ENCODE measurements at regions of chr10 and their contacts with region 1.

Region 1: DNA sequence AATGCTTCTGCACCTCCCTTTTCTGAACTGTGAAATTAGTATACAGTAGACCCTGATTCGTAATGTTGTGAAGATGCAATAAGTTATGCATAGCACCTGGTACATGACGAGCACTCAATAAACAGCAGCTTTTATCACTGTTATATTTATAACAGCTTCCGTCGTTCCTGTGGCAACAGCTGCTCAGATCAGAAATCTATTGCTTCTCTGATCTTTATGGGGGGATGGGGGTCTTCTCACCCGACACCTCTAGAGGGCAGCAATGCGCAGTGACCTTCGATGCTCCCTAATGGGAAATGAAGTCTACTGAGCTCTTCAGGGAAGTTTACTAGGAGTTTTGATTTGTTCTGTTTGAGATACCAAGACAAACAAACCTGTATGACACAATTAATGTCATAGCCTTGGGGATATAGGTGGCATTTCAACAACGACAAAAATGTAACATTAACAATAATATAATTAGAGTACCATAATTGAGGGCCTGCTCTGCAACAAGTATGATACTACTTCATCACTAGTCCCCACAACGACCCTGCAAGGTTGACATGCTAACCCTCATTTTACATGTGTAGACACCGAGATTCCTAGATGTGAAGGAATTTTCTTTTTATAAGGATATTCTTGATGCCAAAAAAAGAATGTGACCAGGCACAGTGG is 289.6 kb downstream of the SFMBT2 start:
- DNase-seq: no peak
- H3K4me3 ChIP-seq: no peak overlapping the region
- H3K27ac ChIP-seq: no peak overlapping the region
- H3K27me3 ChIP-seq: no peaks in the 10 kb centered on the region
- CTCF ChIP-seq: peak; percentile 81

Region 2: GRCh38 chr10:6786579-6787031 is 334.7 kb before region 1 on chr10:
- in situ Hi-C with region 1: no loop called
- DNase-seq: peak; percentile 51
- H3K4me3 ChIP-seq: peak overlapping the region; percentile 12
- H3K27ac ChIP-seq: no peak overlapping the region
- H3K27me3 ChIP-seq: no peaks in the 10 kb centered on the region
- CTCF ChIP-seq: peak; percentile 72

Region 3: GRCh38 chr10:7243873-7244272 is 122.6 kb after region 1 on chr10:
- in situ Hi-C with region 1: no loop called
- DNase-seq: no peak
- H3K4me3 ChIP-seq: no peak overlapping the region
- H3K27ac ChIP-seq: no peak overlapping the region
- H3K27me3 ChIP-seq: no peaks in the 10 kb centered on the region
- CTCF ChIP-seq: no peak

Region 4: GRCh38 chr10:7410862-7411670 is 289.8 kb after region 1 on chr10 and contains the start of gene SFMBT2:
- in situ Hi-C with region 1: loop called (anchors 25 kb)
- DNase-seq: peak; percentile 9
- H3K4me3 ChIP-seq: peak within 1 kb of the TSS; percentile 56
- H3K27ac ChIP-seq: no peak within 1 kb of the TSS
- H3K27me3 ChIP-seq: peaks cover 58% of the 10 kb centered on the region
- CTCF ChIP-seq: peak; percentile 24